A673 (cell line): ENCODE measurements at regions of chr11 and their contacts with region 1.

Region 1: DNA sequence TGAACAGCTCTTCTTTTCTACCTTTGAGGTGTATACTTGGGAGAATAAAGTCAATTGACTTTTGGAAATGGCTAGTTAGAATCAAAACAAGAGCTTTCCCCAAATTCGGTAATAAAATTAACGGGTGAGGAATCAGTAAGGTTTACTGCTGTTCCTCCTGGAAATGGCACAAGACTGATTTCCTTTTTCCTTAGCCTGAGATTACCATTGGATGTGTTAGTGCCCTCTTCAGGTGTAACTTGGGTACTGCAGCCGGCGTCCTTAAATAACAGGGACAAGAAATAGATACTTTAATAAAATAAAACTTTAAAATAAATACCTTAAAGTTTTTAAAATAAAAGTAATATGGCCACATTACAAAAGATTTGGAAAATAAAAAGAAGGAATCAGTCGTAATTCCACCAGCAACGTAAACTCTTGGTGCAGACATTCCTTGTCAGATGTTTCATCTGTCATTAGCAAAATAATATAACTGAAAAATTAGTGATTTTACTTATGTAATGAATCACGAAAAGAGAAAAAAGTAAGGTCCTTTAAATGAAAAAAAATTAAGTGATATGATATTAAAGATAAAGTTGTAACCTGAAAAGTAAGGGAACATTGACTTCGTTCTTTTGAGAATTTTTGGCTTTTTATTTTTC is 29.7 kb downstream of the ZFTA start:
- DNase-seq: peak; percentile 87
- H3K4me3 ChIP-seq: no peak overlapping the region
- H3K27ac ChIP-seq: no peak overlapping the region
- H3K4me1 ChIP-seq: peaks cover 14% of the 10 kb centered on the region
- H3K27me3 ChIP-seq: no peaks in the 10 kb centered on the region
- CTCF ChIP-seq: peak; percentile 98

Region 2: DNA sequence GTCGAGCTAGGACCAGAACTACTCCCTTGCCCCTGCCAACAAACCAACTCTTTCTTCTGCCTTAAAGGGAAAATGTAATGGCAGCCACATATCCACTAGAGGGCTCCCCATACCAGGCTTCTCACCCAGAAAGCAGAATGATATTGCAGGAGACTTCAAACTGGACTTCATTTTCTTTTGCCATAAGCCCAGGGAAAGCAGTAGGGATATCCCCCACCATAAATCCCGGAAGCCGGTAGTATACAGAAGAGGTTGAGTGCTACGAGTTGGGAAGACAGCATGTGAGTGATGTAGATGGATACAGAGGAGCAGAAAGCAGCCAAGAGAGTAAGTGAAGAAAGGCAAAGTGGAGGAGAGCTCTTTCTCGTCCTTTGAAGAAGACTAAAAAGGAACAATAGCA is 259.9 kb before region 1 on chr11:
- CTCF ChIA-PET with region 1: interaction called, 7 read pairs
- POLR2A ChIA-PET with region 1: no interaction called
- intact Hi-C with region 1: loop called (anchors 2 kb)
- DNase-seq: peak; percentile 83
- H3K4me3 ChIP-seq: no peak overlapping the region
- H3K27ac ChIP-seq: no peak overlapping the region
- H3K4me1 ChIP-seq: no peaks in the 10 kb centered on the region
- H3K27me3 ChIP-seq: no peaks in the 10 kb centered on the region
- CTCF ChIP-seq: peak; percentile 97